OCI-LY7 (cell line): ENCODE measurements at regions of chr3 and their contacts with region 1.

Region 1: GRCh38 chr3:63824309-63824708 is 5.2 kb downstream of the C3orf49 start:
- DNase-seq: no peak
- H3K4me3 ChIP-seq: no peak overlapping the region
- H3K27ac ChIP-seq: no peak overlapping the region
- H3K4me1 ChIP-seq: no peaks in the 10 kb centered on the region
- CTCF ChIP-seq: no peak

Region 2: GRCh38 chr3:63872135-63872903 is 48.0 kb after region 1 on chr3:
- CTCF ChIA-PET with region 1: no interaction called
- POLR2A ChIA-PET with region 1: no interaction called
- intact Hi-C with region 1: no loop called
- DNase-seq: no peak
- H3K4me3 ChIP-seq: peak overlapping the region; percentile 8
- H3K27ac ChIP-seq: no peak overlapping the region
- H3K4me1 ChIP-seq: peaks cover 48% of the 10 kb centered on the region
- CTCF ChIP-seq: no peak

Region 3: DNA sequence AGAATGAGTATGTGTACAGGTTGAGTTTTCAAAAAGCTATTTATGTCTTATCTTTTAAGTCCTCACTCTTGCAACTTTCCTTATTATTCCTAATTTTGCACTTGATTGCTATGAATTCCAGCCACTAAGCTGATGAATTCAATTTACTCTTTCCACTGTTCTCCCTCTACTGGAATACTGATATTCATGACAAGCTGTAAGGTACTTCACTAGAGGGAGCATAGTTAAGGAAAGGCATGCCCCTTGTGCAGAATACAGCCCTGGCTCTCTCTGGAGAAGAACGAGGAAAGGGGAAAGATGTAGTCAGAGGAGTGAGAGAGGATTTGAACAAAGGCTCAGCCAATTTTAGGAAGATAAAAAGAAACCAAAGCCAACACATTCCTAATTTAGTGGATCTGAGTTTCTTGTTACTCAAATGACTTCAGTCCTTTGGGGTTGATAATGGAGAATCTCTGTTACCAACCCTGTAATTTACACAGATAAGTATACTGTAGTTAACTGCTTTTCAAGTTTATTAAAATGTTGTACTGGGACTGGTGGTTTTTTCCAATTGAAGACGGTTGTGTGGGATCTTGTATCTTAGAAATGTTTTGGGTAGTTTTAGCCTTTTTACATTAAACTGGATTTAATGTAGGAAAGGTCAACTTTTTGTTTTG is 83.9 kb after region 1 on chr3:
- CTCF ChIA-PET with region 1: no interaction called
- POLR2A ChIA-PET with region 1: no interaction called
- intact Hi-C with region 1: no loop called
- DNase-seq: no peak
- H3K4me3 ChIP-seq: no peak overlapping the region
- H3K27ac ChIP-seq: no peak overlapping the region
- H3K4me1 ChIP-seq: peaks cover 15% of the 10 kb centered on the region
- CTCF ChIP-seq: no peak

Region 4: GRCh38 chr3:63993653-63994079 is 169.4 kb after region 1 on chr3:
- CTCF ChIA-PET with region 1: no interaction called
- POLR2A ChIA-PET with region 1: no interaction called
- intact Hi-C with region 1: loop called (anchors 5 kb)
- DNase-seq: peak; percentile 69
- H3K4me3 ChIP-seq: no peak overlapping the region
- H3K27ac ChIP-seq: no peak overlapping the region
- H3K4me1 ChIP-seq: no peaks in the 10 kb centered on the region
- CTCF ChIP-seq: peak; percentile 88